IMR-90 (cell line): ENCODE measurements at regions of chr17 and their contacts with region 1.

Region 1: DNA sequence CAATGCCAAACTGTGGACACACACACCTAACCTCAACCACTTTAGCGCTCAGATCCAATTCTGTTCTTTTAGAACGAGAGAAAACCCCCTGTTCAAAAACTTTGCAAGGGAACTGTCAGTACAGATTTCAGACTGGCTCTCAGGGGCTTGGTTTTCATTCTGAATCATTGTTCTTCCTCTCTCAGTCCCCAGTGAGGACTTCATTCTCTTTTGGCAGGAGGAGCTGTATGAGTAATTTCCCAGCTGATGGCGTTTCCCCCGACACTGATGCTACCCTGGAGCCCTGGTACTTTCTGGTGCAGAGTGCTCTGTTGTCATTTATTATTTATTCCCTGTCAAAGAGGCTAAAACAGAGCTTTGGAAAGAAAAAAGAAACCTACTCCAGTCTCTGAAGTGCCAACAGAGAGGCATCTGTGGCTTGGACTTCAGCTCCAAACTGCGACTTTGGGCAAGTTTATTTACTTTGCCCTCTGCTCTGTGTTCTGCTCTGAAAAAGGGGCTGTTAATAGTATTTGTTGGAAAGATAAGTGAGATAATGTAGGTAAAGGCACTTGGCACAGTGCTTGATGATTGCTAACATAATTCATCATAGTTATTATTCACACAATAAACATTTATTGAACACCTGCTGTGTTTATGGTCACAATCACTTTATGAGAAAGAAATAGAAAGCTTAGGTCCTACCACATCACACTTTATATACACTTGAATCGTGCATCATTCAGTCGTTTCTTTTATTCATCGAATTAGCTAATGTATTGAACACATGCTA is 28.3 kb downstream of the ETV4 start:
- DNase-seq: peak; percentile 67
- ATAC-seq: peak; percentile 71
- H3K4me3 ChIP-seq: no peak overlapping the region
- H3K27ac ChIP-seq: no peak overlapping the region
- H3K4me1 ChIP-seq: peaks cover 2% of the 10 kb centered on the region; the same call in 1 of the 2 replicates
- H3K27me3 ChIP-seq: no peaks in the 10 kb centered on the region
- CTCF ChIP-seq: no peak
- POLR2A ChIP-seq: no peak
- RAD21 ChIP-seq: 0 out of 2 replicates have a peak, but pooled peaks have one; percentile 3

Region 2: GRCh38 chr17:43211480-43212402 is 306.1 kb before region 1 on chr17 and contains the start of gene TMEM106A:
- CTCF ChIA-PET with region 1: no interaction called
- POLR2A ChIA-PET with region 1: no interaction called
- dilution Hi-C with region 1: no loop called
- in situ Hi-C with region 1: no loop called
- intact Hi-C with region 1: loop called (anchors 10 kb)
- DNase-seq: peak; percentile 85
- ATAC-seq: peak; percentile 88
- H3K4me3 ChIP-seq: peak within 1 kb of the TSS; percentile 74
- H3K27ac ChIP-seq: peak within 1 kb of the TSS; percentile 84
- H3K4me1 ChIP-seq: peaks cover 16% of the 10 kb centered on the region
- H3K27me3 ChIP-seq: no peaks in the 10 kb centered on the region
- CTCF ChIP-seq: peak; percentile 30
- POLR2A ChIP-seq: peak; percentile 71
- RAD21 ChIP-seq: 0 out of 2 replicates have a peak, but pooled peaks have one; percentile 9
- total RNA-seq, gene TMEM106A: 1.4 and 2.2 TPM in 2 replicates

Region 3: GRCh38 chr17:43546319-43547188 is 28.8 kb after region 1 on chr17 and contains the start of gene ETV4:
- CTCF ChIA-PET with region 1: no interaction called
- POLR2A ChIA-PET with region 1: no interaction called
- dilution Hi-C with region 1: no loop called
- in situ Hi-C with region 1: no loop called
- intact Hi-C with region 1: no loop called
- DNase-seq: peak; percentile 89
- ATAC-seq: peak; percentile 87
- H3K4me3 ChIP-seq: peak within 1 kb of the TSS; percentile 61
- H3K27ac ChIP-seq: peak within 1 kb of the TSS; percentile 42; the same call in 1 of the 2 replicates
- H3K4me1 ChIP-seq: peaks cover 14% of the 10 kb centered on the region
- H3K27me3 ChIP-seq: no peaks in the 10 kb centered on the region
- CTCF ChIP-seq: no peak
- POLR2A ChIP-seq: no peak
- RAD21 ChIP-seq: no peak
- total RNA-seq, gene ETV4: 3.3 and 4.3 TPM in 2 replicates

Region 4: GRCh38 chr17:43562679-43563599 is 45.1 kb after region 1 on chr17:
- CTCF ChIA-PET with region 1: interaction called, 3 read pairs
- POLR2A ChIA-PET with region 1: no interaction called
- dilution Hi-C with region 1: no loop called
- in situ Hi-C with region 1: no loop called
- intact Hi-C with region 1: loop called (anchors 2 kb)
- DNase-seq: no peak
- ATAC-seq: no peak
- H3K4me3 ChIP-seq: no peak overlapping the region
- H3K27ac ChIP-seq: no peak overlapping the region
- H3K4me1 ChIP-seq: no peaks in the 10 kb centered on the region
- H3K27me3 ChIP-seq: no peaks in the 10 kb centered on the region; the same call in 1 of the 2 replicates
- CTCF ChIP-seq: no peak
- POLR2A ChIP-seq: no peak
- RAD21 ChIP-seq: no peak

Region 5: GRCh38 chr17:43576563-43577229 is 58.9 kb after region 1 on chr17:
- CTCF ChIA-PET with region 1: interaction called, 4 read pairs
- POLR2A ChIA-PET with region 1: no interaction called
- dilution Hi-C with region 1: no loop called
- in situ Hi-C with region 1: no loop called
- intact Hi-C with region 1: loop called (anchors 1 kb)
- DNase-seq: peak; percentile 77
- ATAC-seq: peak; percentile 71
- H3K4me3 ChIP-seq: no peak overlapping the region
- H3K27ac ChIP-seq: no peak overlapping the region
- H3K4me1 ChIP-seq: peaks cover 14% of the 10 kb centered on the region
- H3K27me3 ChIP-seq: no peaks in the 10 kb centered on the region
- CTCF ChIP-seq: peak; percentile 93
- POLR2A ChIP-seq: peak; percentile 56; the same call in 1 of the 2 replicates
- RAD21 ChIP-seq: peak; percentile 99